Dorsolateral prefrontal cortex (tissue), 120 donors: ENCODE measurements at regions of chr7 and their contacts with region 1.

Region 1: DNA sequence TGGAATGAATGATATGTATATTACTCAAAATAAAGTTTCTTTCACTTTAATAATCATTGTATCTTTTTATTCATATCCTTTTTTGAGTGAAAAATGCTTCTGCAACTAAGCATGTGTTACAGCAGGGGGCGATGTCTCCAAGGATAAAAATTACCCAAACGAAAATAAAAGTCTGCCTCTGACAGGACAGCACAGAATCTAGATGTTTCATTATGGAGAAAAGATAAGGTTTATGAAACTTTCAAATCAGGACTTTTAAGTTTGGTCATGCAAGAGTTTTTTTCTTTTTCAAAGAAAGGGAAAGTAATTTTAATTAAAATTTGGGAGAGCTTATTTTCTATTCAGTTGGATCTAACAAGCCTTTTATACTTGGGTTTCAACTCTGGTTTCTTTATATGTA is 48.4 kb downstream of the TES start:
- DNase-seq: peak in 1 of 10 donors; percentile 18
- H3K4me3 ChIP-seq: no peak overlapping the region
- H3K27ac ChIP-seq: no peak overlapping the region
- H3K27me3 ChIP-seq: peaks cover 0 to 3% (median 0%) of the 10 kb centered on the region in 45 donors
- CTCF ChIP-seq: peak; percentile 85 to 99 (median 93)

Region 2: GRCh38 chr7:116340943-116341907 is 82.5 kb after region 1 on chr7:
- intact Hi-C with region 1: loop called in 1 of 2 experiments (anchors 5 kb)
- DNase-seq: no peak
- H3K4me3 ChIP-seq: no peak overlapping the region
- H3K27ac ChIP-seq: no peak overlapping the region
- H3K27me3 ChIP-seq: no peaks in the 10 kb centered on the region
- CTCF ChIP-seq: peak in 20 of 56 donors; percentile 10 to 57 (median 26)

Region 3: GRCh38 chr7:116525913-116526861 is 267.5 kb after region 1 on chr7:
- intact Hi-C with region 1: loop called (anchors 5 to 10 kb)
- DNase-seq: peak in 8 of 10 donors; percentile 32 to 75 (median 41)
- H3K4me3 ChIP-seq: peak overlapping the region; percentile 48 to 80 (median 67)
- H3K27ac ChIP-seq: peak overlapping the region in 41 of 59 donors; percentile 16 to 86 (median 66)
- H3K27me3 ChIP-seq: peaks cover 0 to 43% (median 10%) of the 10 kb centered on the region in 45 donors
- CTCF ChIP-seq: peak; percentile 28 to 90 (median 64)

Region 4: DNA sequence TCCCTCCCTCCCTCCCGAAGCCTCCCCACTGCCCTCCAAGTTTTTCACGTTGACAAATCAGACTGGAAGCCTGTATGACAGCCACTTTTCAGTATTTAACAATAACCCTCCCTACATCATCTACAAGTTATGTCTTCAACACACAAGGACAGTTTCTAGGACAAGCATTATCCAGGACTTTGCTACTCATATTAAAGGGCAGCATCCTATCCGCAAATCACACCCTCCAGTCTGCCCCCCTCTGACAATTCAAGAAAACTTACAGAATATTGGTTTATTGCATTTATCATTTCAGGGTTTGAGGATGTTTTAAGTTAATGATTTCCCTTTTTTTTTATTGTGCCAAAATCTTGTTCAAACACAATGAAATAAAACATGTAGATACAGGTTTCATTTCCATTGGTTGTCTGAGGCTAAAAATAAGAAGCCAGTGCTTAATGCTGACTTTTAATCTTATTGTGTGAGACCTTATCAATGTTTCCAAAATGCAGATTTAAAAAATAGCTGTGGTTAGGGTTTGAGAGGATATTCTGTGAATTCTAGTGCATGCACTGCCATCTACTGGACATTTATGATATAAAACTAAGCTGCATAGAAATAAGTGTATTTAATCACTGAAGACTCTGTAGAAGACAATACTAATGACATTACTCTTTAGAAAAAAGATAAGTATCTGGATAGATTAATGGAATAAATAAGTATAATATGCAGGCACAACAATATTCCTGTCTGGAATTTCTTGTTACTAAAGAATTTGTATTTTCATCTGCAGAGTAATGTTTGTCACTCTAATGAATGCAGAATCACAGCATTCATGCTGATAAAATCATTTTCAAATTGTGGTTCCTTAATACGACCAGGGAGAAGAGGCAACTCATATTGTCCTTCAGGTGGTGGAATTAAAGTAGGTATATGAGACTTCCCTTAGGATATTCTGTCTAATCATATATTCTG is 330.2 kb after region 1 on chr7:
- intact Hi-C with region 1: loop called (anchors 2 kb)
- DNase-seq: no peak
- H3K4me3 ChIP-seq: no peak overlapping the region
- H3K27ac ChIP-seq: peak overlapping the region in 1 of 59 donors; percentile 12
- H3K27me3 ChIP-seq: no peaks in the 10 kb centered on the region
- CTCF ChIP-seq: peak; percentile 73 to 98 (median 85)